ENCODE measurements at regions of chr14 and their contacts with region 1.

Region 1: GRCh38 chr14:76962303-76962660 is 66.2 kb downstream of the IRF2BPL start:
- DNase-seq: peak; percentile 14
- ATAC-seq: peak; percentile 4
- H3K4me3 Mint-ChIP-seq: peak overlapping the region; percentile 75
- H3K27ac Mint-ChIP-seq: peak overlapping the region; percentile 100
- H3K4me1 Mint-ChIP-seq: peaks cover 88% of the 10 kb centered on the region
- H3K27me3 Mint-ChIP-seq: peaks cover 2% of the 10 kb centered on the region
- CTCF ChIP-seq: no peak

Region 2: GRCh38 chr14:76977793-76978720 is 15.8 kb after region 1 on chr14:
- CTCF ChIA-PET with region 1: interaction called, 5 read pairs
- POLR2A ChIA-PET with region 1: interaction called, 17 read pairs
- intact Hi-C with region 1: no loop called
- DNase-seq: peak; percentile 98
- ATAC-seq: peak; percentile 97
- H3K4me3 Mint-ChIP-seq: peak overlapping the region; percentile 61
- H3K27ac Mint-ChIP-seq: peak overlapping the region; percentile 94
- H3K4me1 Mint-ChIP-seq: peaks cover 36% of the 10 kb centered on the region
- H3K27me3 Mint-ChIP-seq: no peaks in the 10 kb centered on the region
- CTCF ChIP-seq: no peak

Region 3: DNA sequence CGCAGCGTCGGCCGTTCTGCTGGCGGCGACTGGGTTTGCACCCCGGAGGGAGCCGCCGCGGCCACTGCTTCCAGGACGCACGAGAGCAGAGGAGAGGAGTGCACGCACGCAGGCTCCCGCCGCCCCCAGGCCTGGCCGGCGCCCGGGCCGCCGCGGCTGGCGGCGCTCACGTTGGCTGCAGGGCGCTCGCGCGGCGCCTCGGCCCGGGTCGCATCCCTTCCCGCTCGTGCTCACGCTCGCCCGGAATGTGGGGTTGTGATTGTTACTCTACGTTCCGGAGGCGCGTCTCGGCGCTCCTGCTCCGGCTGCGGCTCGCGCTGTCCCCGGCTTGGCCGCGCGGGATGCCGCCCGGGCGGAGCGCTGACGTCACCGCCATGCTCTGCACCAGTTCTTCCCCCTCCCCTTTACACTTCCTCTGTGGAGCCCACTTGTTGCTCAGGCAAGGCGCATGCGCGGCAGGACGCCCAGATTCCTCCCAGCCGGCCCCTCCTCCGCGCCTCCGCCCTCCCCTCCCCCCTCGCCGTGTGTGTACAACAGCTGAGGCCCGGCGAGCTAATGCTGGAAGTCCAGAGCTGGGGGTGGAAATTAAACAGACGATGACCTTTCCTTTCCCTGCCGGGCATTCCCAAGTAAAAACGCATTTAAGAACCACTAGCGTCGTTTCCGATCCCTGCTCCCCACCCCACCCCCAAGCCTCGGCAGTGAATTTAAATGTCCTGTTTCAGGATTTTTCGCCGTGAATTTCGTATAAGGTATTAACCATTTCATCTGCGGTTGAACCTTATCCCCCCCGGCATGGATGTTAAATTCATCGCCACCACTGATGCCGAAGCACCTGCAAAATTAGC is 66.3 kb after region 1 on chr14 and contains the start of gene IRF2BPL:
- CTCF ChIA-PET with region 1: interaction called, 11 read pairs
- POLR2A ChIA-PET with region 1: interaction called, 27 read pairs
- intact Hi-C with region 1: loop called (anchors 2 kb)
- DNase-seq: peak; percentile 95
- ATAC-seq: peak; percentile 73
- H3K4me3 Mint-ChIP-seq: peak within 1 kb of the TSS; percentile 97
- H3K27ac Mint-ChIP-seq: peak within 1 kb of the TSS; percentile 94
- H3K4me1 Mint-ChIP-seq: peaks cover 51% of the 10 kb centered on the region
- H3K27me3 Mint-ChIP-seq: no peaks in the 10 kb centered on the region
- CTCF ChIP-seq: no peak
- total RNA-seq, gene IRF2BPL: 36.2 to 37.7 TPM

Region 4: DNA sequence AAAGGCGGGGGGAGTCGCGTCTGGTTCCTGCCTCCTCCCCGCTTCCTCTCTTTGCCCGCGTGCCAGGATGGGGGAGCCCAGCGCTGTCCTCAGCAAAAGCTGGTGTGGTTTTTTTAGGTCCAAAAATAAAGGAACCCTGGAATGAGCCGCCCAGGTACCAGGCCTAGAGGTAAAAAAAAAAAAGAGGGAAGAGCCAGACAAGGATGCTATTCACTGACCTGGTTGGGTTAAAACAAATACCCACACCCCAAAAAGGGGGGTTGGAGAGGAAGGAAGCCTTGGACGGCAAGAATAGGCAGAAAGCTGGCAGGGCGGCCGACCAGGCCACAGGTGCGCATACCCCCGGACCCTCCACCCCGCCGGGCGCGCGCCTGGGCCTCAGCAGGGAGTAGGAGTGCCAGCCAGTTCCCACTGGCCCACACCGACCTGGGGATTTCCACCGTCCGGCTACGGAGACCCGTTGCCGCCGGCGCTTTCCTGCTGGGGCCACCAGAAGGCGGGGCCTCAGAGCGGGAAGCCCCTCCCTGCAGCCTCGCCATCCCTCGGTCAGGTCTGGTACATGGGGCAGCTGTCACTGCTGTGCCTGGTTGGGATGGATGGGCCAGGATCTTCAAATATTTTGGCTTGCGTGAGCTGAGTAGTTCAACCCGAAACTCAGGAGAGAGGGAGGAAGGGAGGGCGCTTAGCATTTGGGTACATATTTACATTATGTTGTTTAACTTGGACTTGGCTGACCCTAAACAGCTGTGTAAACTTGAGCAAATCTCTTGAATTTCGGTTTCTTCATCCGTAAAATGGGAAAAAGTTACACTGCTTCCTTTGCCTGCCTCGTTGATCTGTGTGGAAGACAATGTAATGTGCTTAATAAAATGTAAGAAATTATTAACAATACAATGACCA is 71.6 kb after region 1 on chr14:
- CTCF ChIA-PET with region 1: interaction called, 5 read pairs
- POLR2A ChIA-PET with region 1: interaction called, 42 read pairs
- intact Hi-C with region 1: loop called (anchors 2 kb)
- DNase-seq: peak; percentile 93
- ATAC-seq: peak; percentile 72
- H3K4me3 Mint-ChIP-seq: peak overlapping the region; percentile 87
- H3K27ac Mint-ChIP-seq: peak overlapping the region; percentile 98
- H3K4me1 Mint-ChIP-seq: peaks cover 69% of the 10 kb centered on the region
- H3K27me3 Mint-ChIP-seq: no peaks in the 10 kb centered on the region
- CTCF ChIP-seq: no peak